ENCODE measurements at regions of chr3 and their contacts with region 1.

Region 1: DNA sequence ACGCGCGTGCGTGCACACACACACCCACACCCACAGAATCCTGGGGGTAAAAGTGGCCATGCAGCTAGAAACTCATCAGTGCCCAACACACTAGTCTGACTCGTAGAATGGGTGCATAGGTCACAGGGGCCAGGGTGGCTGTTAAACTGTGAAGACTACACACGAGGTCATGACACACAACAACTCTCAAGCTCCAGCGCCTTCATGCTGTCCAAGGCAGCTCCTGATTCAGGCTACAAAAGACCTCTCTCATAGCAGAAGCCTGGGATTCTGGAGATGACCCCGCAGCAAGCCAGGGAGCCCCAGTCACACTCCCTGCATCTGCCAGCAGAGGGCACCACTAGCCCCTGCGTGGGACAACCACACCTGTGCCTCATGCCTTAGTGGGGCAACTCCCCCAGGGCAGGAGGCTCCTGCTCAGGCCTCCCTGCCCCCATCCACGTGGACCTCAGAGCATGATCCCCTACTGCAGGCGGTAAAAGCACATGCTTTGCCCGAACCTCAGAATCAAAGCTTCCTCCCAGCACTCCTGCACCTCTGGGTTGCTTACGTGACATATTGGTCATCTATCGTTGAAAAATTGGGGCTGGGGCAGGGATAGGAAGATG is 93.1 kb downstream of the LRIG1 start:
- DNase-seq: peak; percentile 64
- H3K4me3 ChIP-seq: no peak overlapping the region
- H3K27ac ChIP-seq: no peak overlapping the region
- H3K4me1 ChIP-seq: peaks cover 36% of the 10 kb centered on the region
- H3K27me3 ChIP-seq: no peaks in the 10 kb centered on the region

Region 2: GRCh38 chr3:65381496-65382010 is 1026.2 kb before region 1 on chr3:
- in situ Hi-C with region 1: no loop called
- DNase-seq: no peak
- H3K4me3 ChIP-seq: no peak overlapping the region
- H3K27ac ChIP-seq: no peak overlapping the region
- H3K4me1 ChIP-seq: no peaks in the 10 kb centered on the region
- H3K27me3 ChIP-seq: no peaks in the 10 kb centered on the region

Region 3: DNA sequence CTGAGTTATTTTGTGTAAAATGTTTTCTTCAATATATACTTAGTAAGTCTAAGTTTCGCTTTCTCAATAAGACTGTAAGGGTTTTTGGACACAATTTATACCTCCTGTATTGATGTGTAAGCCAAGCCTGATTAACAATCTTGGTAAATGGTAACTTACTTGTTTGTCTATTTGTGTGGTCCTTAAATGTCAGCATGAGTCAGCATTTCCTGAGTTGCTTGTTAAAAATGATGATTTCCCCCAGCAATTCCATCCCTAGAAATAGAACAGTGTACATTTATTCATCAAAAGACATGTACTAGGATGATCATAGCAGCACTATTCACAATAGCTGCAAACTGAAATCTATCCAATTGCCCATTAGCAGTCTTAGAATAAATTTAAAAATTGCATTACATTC is 146.5 kb after region 1 on chr3:
- in situ Hi-C with region 1: no loop called
- DNase-seq: peak; percentile 30
- H3K4me3 ChIP-seq: no peak overlapping the region
- H3K27ac ChIP-seq: no peak overlapping the region
- H3K4me1 ChIP-seq: no peaks in the 10 kb centered on the region; the same call in 1 of the 2 replicates
- H3K27me3 ChIP-seq: no peaks in the 10 kb centered on the region

Region 4: GRCh38 chr3:66816090-66816761 is 408.5 kb after region 1 on chr3:
- in situ Hi-C with region 1: loop called (anchors 10 kb)
- DNase-seq: peak; percentile 63
- H3K4me3 ChIP-seq: no peak overlapping the region
- H3K27ac ChIP-seq: no peak overlapping the region
- H3K4me1 ChIP-seq: no peaks in the 10 kb centered on the region
- H3K27me3 ChIP-seq: peaks cover 21% of the 10 kb centered on the region

Region 5: DNA sequence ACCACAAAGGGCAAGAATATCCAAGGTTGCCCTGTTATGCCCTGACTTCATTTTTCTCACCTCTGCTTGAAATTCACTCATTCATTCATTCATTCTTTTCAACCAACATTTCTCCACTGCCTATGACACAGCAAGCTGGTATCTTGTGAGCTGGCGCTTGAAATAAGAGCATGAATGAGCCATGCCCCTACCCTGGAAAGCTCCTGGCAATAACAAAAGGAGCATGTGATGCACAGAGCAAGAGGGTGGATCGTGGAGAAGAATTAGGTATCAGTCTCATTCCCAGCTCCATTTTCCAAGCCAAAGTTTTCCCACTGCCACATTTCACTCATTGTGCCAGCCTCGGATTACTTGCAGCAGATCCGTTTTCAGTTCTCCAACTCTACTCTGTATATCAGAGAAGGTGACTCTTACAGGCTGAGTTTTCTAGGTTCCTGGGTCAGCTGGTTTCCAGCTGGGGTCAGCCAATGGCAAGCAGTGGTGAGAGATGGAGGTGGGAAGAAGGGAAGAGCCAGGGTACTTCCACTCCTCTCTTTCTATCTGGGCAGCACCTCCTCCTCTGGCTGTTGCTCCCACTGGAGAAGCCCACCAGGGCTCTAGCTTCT is 1101.9 kb after region 1 on chr3:
- in situ Hi-C with region 1: no loop called
- DNase-seq: peak; percentile 52
- H3K4me3 ChIP-seq: no peak overlapping the region
- H3K27ac ChIP-seq: no peak overlapping the region
- H3K4me1 ChIP-seq: peaks cover 7% of the 10 kb centered on the region; the same call in 1 of the 2 replicates
- H3K27me3 ChIP-seq: no peaks in the 10 kb centered on the region